ENCODE measurements at regions of chr5 and their contacts with region 1.

Region 1: DNA sequence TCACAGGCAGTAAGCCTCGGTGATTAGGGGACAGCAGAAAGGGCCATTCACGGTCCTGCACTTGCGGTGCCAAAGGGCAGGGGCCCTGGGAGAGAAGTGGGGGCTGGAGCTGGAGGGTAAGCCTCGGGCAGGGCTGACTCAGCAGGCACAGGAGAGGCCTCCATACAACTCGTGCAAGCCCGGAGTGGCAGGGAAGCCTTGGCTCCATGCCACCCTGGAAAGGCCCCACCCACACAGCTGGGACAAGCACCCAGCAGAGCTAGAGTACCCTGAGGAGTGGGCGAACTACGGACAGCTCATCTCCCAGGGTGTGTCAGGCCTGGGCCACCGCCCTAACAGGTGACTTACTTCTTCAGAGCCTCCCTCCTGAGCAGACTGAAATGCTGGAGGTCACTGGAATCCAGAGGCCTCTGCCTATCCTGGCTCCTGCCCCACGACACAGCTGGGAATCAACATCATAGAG is 5.6 kb upstream of the CAMK2A start:
- DNase-seq: peak; percentile 88
- H3K4me3 Mint-ChIP-seq: no peak overlapping the region
- H3K27ac Mint-ChIP-seq: peak overlapping the region; percentile 82
- H3K4me1 Mint-ChIP-seq: peaks cover 36% of the 10 kb centered on the region
- H3K27me3 Mint-ChIP-seq: no peaks in the 10 kb centered on the region
- CTCF ChIP-seq: no peak

Region 2: DNA sequence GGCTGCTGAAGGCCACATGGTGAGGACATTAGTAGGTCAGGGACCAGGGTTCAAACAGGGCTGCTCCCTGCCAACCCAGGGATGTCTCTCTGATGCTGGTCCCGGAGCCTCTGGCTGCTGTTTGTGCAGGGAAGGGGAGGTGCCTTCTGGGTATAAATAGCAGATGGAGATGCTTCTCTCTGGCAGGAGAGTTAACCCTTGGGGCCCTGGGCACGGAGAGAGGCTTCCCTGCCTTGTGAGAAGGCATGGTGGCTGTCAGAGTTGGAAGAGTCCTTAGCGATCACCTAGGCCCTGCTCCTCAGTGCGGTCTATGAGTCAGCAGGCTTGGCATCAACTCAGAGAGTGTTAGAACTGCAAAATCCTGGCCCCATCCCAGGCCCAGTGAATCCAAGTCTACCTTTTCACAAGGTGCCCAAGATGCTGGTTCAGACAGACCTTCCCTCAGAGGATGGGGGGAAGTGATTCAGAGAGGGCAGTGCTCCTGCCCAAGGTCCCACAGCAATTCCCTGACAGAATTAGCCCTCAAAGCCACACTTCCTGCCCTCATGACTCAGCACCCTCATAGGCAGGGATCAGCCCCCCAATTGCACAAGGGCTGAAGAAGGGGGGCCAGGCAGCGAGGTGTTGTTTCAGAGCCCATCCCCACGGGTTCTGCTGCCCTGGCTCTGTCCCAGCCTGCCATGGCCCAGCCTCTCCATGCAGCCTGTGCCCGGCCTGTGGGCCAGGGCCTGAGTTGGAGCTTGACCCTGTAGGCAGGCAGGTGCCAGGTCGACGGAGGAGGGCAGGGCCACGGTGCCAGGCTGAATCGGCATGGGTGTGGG is 31.2 kb before region 1 on chr5:
- CTCF ChIA-PET with region 1: no interaction called
- POLR2A ChIA-PET with region 1: no interaction called
- intact Hi-C with region 1: loop called (anchors 2 kb)
- DNase-seq: peak; percentile 100
- H3K4me3 Mint-ChIP-seq: no peak overlapping the region
- H3K27ac Mint-ChIP-seq: peak overlapping the region; percentile 13
- H3K4me1 Mint-ChIP-seq: peaks cover 11% of the 10 kb centered on the region
- H3K27me3 Mint-ChIP-seq: no peaks in the 10 kb centered on the region
- CTCF ChIP-seq: no peak

Region 3: DNA sequence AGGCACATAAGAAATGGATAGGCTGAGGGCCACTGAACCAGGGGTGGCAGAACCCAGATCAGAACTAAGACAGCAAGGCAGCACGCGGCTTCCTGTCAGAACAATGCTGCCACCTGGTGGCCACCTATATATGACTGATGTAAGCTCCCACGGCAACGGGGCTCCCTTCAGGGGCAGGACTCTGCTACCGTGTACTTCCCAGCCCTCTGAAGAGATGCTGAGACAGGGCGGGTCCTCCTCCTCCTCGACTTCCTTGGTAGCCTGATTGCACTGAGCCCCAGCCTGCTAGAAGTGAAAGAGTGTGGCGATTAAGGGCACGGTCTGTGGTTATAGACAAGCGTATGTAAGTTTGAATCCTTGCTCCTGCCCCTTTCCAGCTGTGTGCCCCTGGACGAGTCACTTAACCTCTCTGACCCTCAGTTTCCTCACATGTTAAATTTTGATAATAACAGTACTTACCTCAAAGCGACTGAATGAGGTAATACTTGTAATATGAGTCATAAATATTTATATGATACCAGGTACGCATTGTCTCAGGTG is 141.0 kb after region 1 on chr5:
- CTCF ChIA-PET with region 1: no interaction called
- POLR2A ChIA-PET with region 1: no interaction called
- intact Hi-C with region 1: no loop called
- DNase-seq: peak; percentile 89
- H3K4me3 Mint-ChIP-seq: no peak overlapping the region
- H3K27ac Mint-ChIP-seq: no peak overlapping the region
- H3K4me1 Mint-ChIP-seq: peaks cover 14% of the 10 kb centered on the region
- H3K27me3 Mint-ChIP-seq: no peaks in the 10 kb centered on the region
- CTCF ChIP-seq: peak; percentile 94

Region 4: GRCh38 chr5:150589871-150590601 is 294.8 kb after region 1 on chr5:
- CTCF ChIA-PET with region 1: no interaction called
- POLR2A ChIA-PET with region 1: no interaction called
- intact Hi-C with region 1: no loop called
- DNase-seq: no peak
- H3K4me3 Mint-ChIP-seq: no peak overlapping the region
- H3K27ac Mint-ChIP-seq: no peak overlapping the region
- H3K4me1 Mint-ChIP-seq: peaks cover 7% of the 10 kb centered on the region
- H3K27me3 Mint-ChIP-seq: no peaks in the 10 kb centered on the region
- CTCF ChIP-seq: no peak